Activated naive CD4-positive, alpha-beta T cell treated with anti-CD3 and anti-CD28 coated beads, Interleukin-2, amount 10 ng/mL, durations not matched to agents 7 days and 5 days (primary cell): ENCODE measurements at regions of chr11 and their contacts with region 1.

Region 1: GRCh38 chr11:77547863-77548551 is 41.7 kb upstream of the AQP11 start:
- DNase-seq: peak; percentile 48
- H3K4me3 Mint-ChIP-seq: no peak overlapping the region
- H3K27ac Mint-ChIP-seq: no peak overlapping the region
- H3K4me1 Mint-ChIP-seq: no peaks in the 10 kb centered on the region
- H3K27me3 Mint-ChIP-seq: peaks cover 4% of the 10 kb centered on the region

Region 2: GRCh38 chr11:77187776-77188632 is 360.0 kb before region 1 on chr11:
- CTCF ChIA-PET with region 1: interaction called, 16 read pairs
- DNase-seq: peak; percentile 78
- H3K4me3 Mint-ChIP-seq: no peak overlapping the region
- H3K27ac Mint-ChIP-seq: no peak overlapping the region
- H3K4me1 Mint-ChIP-seq: no peaks in the 10 kb centered on the region
- H3K27me3 Mint-ChIP-seq: peaks cover 3% of the 10 kb centered on the region

Region 3: DNA sequence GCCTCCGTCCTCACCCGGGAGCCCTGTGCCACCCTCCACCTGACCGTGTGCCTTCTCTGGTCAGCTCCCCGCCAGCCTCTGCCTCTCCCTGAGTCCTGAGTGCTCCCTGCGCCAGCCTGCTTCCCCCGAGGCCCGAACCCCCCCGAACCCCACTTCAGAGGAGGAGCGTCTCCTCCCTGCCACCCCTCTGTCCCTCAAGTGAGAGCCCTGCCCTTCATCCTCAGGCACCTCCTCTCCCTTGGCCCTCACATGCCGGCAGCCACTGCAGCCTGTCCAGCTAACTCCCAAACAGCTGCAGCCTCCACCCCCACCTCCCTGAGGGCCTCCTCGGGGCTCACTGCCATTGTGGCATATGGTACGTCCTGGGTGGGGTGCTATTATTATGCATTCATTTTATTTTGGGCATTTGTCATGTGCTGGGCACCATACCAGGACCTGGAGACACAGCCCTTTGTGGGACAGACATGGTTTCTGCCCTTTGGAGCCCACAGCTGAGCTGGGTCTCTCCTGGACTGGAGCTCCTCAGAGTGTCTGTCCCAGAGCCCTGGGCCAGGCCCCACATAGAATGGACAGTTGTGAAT is 352.7 kb before region 1 on chr11:
- CTCF ChIA-PET with region 1: interaction called, 34 read pairs
- DNase-seq: no peak
- H3K4me3 Mint-ChIP-seq: no peak overlapping the region
- H3K27ac Mint-ChIP-seq: no peak overlapping the region
- H3K4me1 Mint-ChIP-seq: no peaks in the 10 kb centered on the region
- H3K27me3 Mint-ChIP-seq: no peaks in the 10 kb centered on the region

Region 4: DNA sequence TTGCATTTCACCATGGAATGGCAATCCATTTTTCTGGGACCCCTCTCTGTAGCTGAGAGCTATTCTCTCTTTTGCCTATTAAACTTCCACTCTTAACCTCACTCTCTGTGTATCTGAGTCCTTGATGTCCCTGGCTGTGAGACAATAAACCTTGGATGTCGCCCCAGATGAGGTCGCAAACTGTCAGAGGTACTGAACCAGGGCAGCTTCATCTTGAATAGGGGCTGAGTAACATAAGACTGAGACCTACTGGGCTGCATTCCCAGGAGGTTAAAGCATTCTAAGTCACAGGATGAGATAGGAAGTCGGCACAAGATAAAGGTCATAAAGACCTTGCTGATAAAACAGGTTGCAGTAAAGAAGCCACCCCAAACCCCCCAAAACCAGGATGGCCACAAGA is 204.5 kb after region 1 on chr11:
- CTCF ChIA-PET with region 1: no interaction called
- DNase-seq: no peak
- H3K4me3 Mint-ChIP-seq: no peak overlapping the region
- H3K27ac Mint-ChIP-seq: no peak overlapping the region
- H3K4me1 Mint-ChIP-seq: no peaks in the 10 kb centered on the region
- H3K27me3 Mint-ChIP-seq: no peaks in the 10 kb centered on the region